ENCODE measurements at regions of chr21 and their contacts with region 1.

Region 1: DNA sequence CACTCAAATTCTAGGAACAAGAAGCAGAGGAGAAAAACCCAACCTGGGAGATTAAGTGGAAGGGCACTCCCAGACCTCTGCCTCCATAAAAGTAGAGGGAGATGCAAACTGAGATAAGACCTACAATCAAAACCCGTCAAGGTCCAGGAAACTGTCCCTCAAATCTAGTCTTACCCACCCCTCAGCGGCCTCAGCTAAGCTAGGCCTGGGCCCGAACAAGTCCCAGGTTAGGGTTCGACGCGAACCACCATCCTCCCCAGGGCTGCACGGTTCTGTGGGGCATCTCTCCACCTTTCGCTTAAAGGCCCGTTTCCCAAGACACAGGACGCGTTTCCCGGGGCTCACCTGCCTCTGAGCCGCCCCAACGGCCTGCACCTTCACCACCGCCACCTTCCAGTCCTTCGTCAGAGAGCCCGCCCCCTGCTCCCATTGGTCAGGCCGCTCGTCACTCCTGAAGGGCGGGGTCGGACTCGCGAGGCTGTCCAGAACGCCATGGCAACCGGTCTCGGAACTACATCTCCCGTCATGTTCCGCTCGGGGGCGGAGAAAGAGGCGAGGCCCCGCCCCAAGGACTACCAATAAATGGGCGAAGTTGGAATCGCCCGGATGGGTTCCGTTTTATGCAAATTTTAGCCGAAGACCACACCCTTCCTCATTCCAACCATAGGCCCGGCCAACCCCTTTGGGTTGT is at the start of gene CRYZL1:
- DNase-seq: peak; percentile 96 to 100 (median 100)
- ATAC-seq: peak; percentile 89
- H3K4me3 ChIP-seq: peak within 1 kb of the TSS; percentile 97
- H3K4me3 Mint-ChIP-seq: peak within 1 kb of the TSS; percentile 83 to 99 (median 93)
- H3K27ac ChIP-seq: peak within 1 kb of the TSS; percentile 75
- H3K27ac Mint-ChIP-seq: peak within 1 kb of the TSS; percentile 85 to 100 (median 94)
- H3K4me1 ChIP-seq: peaks cover 4 to 7% of the 10 kb centered on the region in 2 donors
- H3K4me1 Mint-ChIP-seq: peaks cover 19 to 50% (median 37%) of the 10 kb centered on the region in 7 donors
- H3K27me3 ChIP-seq: no peaks in the 10 kb centered on the region
- H3K27me3 Mint-ChIP-seq: peaks cover 9 to 29% (median 15%) of the 10 kb centered on the region in 5 donors
- total RNA-seq, gene CRYZL1: 34.6 to 75.5 (median 40.4) TPM

Region 2: DNA sequence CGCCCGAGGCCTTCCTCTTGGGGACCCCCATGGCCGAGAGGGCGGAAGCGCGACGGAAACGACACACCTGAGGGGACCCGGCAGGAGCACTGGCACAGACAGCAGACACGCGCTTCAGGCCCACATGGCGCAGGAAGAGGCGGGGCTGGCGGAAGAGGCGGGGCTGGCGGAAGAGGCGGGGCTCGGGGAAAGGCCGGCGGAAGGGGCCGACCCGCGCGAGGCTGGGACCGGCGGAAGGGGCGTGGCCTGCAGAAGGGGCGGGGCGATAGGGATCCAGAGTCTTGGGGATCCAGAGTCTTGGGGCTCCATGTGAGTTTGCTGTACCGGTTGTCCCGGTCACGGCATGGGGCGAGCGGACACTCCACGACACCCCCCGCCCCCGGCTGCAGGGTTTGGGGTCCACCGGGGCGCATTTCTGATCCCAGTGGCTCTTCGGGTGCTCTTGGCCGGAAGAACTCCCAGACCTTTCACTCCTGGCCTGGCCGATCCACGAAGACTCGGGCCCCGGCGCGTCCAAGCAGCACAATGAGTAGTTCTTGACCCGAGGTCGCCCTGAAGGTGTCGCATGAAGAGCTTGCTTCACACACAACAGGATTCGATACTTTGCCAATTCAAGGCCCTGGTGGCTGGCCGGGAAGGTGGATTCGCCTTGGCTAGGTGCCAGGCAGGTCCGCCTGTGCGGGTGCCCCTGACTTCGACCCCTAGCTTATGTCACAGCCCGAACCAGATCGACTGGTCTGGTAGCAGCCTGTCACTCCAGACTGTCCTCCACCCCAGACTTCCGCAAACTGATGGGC is 1248.4 kb before region 1 on chr21 and contains the start of gene URB1:
- CTCF ChIA-PET with region 1: no interaction called
- POLR2A ChIA-PET with region 1: no interaction called
- intact Hi-C with region 1: loop called in 1 of 2 experiments (anchors 1 kb)
- DNase-seq: peak; percentile 88 to 99 (median 94)
- ATAC-seq: peak; percentile 99
- H3K4me3 ChIP-seq: peak within 1 kb of the TSS; percentile 85
- H3K4me3 Mint-ChIP-seq: peak within 1 kb of the TSS; percentile 81 to 92 (median 86)
- H3K27ac ChIP-seq: peak within 1 kb of the TSS; percentile 70
- H3K27ac Mint-ChIP-seq: peak within 1 kb of the TSS; percentile 46 to 90 (median 71)
- H3K4me1 ChIP-seq: peaks cover 8 to 12% of the 10 kb centered on the region in 2 donors
- H3K4me1 Mint-ChIP-seq: peaks cover 34 to 52% (median 43%) of the 10 kb centered on the region in 7 donors
- H3K27me3 ChIP-seq: no peaks in the 10 kb centered on the region
- H3K27me3 Mint-ChIP-seq: peaks cover 2 to 20% (median 3%) of the 10 kb centered on the region in 5 donors
- total RNA-seq, gene URB1: 14.5 to 20.6 (median 17.9) TPM

Region 3: GRCh38 chr21:32727687-32728455 is 913.6 kb before region 1 on chr21 and contains the start of gene SYNJ1:
- CTCF ChIA-PET with region 1: no interaction called
- POLR2A ChIA-PET with region 1: interaction called, 3 read pairs
- intact Hi-C with region 1: loop called (anchors 1 kb)
- DNase-seq: peak; percentile 90 to 97 (median 93)
- ATAC-seq: peak; percentile 95
- H3K4me3 ChIP-seq: peak within 1 kb of the TSS; percentile 78
- H3K4me3 Mint-ChIP-seq: peak within 1 kb of the TSS; percentile 92 to 100 (median 98)
- H3K27ac ChIP-seq: peak within 1 kb of the TSS; percentile 82
- H3K27ac Mint-ChIP-seq: peak within 1 kb of the TSS; percentile 90 to 99 (median 97)
- H3K4me1 ChIP-seq: peaks cover 7 to 42% of the 10 kb centered on the region in 2 donors
- H3K4me1 Mint-ChIP-seq: peaks cover 29 to 78% (median 69%) of the 10 kb centered on the region in 7 donors
- H3K27me3 ChIP-seq: no peaks in the 10 kb centered on the region
- H3K27me3 Mint-ChIP-seq: no peaks in the 10 kb centered on the region
- total RNA-seq, gene SYNJ1: 21.5 to 28.5 (median 22.2) TPM

Region 4: DNA sequence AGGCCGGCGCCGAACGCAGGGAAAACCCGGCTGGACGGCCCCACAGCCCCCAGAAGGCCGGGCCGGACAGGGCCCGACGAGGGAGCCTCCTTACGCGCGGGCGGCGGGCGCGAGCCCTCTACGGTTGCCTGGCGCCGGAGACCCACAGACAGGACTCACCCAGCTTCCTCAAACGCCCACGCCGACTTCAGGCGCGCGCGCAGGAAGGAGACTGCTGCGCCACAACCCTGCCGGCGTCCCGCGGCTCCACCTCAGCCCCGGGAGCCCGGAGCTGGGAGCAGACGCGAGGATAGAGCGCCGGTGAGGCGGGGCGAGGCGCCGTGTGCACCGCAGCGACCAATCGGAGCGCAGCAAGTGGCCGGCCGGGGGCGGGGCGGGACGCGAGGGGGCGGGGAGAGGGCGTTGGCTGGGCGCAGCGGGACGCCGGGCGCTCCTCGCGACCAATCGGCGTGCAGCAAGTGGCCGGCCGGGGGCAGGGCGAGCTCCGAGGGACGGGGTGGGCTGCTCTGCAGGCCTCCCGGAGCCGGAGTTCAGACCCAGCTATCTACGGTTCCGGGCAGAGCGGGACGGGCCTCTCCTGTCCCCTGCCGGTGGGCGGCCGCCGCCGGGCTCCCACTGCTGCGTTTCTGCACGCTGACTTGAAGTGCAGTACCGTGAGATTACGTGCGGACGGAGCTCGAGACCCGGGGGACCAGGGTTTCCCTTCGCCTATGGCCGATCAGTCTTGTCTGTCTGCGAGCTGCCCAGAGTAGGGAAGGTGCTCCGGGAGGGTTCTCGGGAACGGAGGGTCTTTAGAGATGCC is 161.6 kb before region 1 on chr21 and contains the start of gene TMEM50B:
- CTCF ChIA-PET with region 1: no interaction called
- POLR2A ChIA-PET with region 1: interaction called, 3 read pairs
- intact Hi-C with region 1: loop called (anchors 1 kb)
- DNase-seq: peak; percentile 85 to 96 (median 94)
- ATAC-seq: peak; percentile 95
- H3K4me3 ChIP-seq: peak within 1 kb of the TSS; percentile 70
- H3K4me3 Mint-ChIP-seq: peak within 1 kb of the TSS; percentile 87 to 96 (median 96)
- H3K27ac ChIP-seq: peak within 1 kb of the TSS; percentile 89
- H3K27ac Mint-ChIP-seq: peak within 1 kb of the TSS; percentile 90 to 99 (median 95)
- H3K4me1 ChIP-seq: peaks cover 0 to 5% of the 10 kb centered on the region in 2 donors
- H3K4me1 Mint-ChIP-seq: peaks cover 7 to 33% (median 21%) of the 10 kb centered on the region in 7 donors
- H3K27me3 ChIP-seq: no peaks in the 10 kb centered on the region
- H3K27me3 Mint-ChIP-seq: peaks cover 0 to 15% (median 0%) of the 10 kb centered on the region in 5 donors
- total RNA-seq, gene TMEM50B: 38.3 to 108 (median 61.7) TPM

Region 5: GRCh38 chr21:33894736-33895288 is 253.3 kb after region 1 on chr21:
- CTCF ChIA-PET with region 1: no interaction called
- POLR2A ChIA-PET with region 1: no interaction called
- intact Hi-C with region 1: loop called in 1 of 2 experiments (anchors 2 kb)
- DNase-seq: peak; percentile 23 to 74 (median 67)
- ATAC-seq: peak; percentile 97
- H3K4me3 ChIP-seq: peak overlapping the region; percentile 36
- H3K4me3 Mint-ChIP-seq: peak overlapping the region; percentile 64 to 90 (median 78)
- H3K27ac ChIP-seq: peak overlapping the region; percentile 23
- H3K27ac Mint-ChIP-seq: peak overlapping the region in 8 of 9 donors; percentile 33 to 90 (median 74)
- H3K4me1 ChIP-seq: no peaks in the 10 kb centered on the region
- H3K4me1 Mint-ChIP-seq: peaks cover 8 to 16% (median 15%) of the 10 kb centered on the region in 7 donors
- H3K27me3 ChIP-seq: no peaks in the 10 kb centered on the region
- H3K27me3 Mint-ChIP-seq: peaks cover 0 to 26% (median 0%) of the 10 kb centered on the region in 5 donors

Region 6: DNA sequence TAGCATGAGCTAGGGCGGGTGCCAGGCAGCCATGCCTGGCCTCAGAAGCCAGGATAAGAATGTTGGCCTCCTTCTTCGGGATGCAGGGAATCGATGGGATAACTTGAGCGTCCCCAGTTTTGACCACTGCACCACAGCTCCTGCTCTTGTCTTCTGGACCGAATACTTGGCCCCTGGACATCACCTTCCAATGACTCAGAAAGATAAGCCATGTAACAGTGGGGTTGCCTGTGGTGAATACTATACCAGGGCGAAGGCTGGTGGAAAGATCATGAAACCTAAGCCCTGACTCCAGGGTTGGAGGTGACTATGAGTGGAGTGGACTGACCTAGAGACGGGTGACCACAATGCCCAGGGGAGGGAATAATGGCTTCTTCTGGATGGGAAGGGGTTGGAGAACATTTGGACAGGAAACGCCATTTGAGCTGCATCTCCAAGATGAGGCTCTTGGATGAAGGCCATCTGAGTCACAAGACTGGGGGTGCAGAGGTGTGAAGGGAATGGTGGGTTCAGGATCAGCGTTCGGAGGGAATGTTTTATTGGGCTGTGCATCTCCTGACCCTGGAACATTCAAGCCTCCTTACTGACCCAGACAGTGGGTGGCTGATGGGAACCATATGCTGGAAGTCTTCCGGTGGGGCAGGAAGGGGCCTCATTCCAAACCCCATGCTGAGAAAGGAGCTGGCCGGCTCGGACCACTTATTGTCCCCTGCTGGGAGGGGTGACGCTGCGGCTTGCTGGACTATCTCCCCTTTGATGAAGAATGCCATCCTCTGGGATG is 703.8 kb after region 1 on chr21:
- CTCF ChIA-PET with region 1: no interaction called
- POLR2A ChIA-PET with region 1: no interaction called
- intact Hi-C with region 1: loop called in 1 of 2 experiments (anchors 5 kb)
- DNase-seq: no peak
- ATAC-seq: no peak
- H3K4me3 ChIP-seq: no peak overlapping the region
- H3K4me3 Mint-ChIP-seq: no peak overlapping the region
- H3K27ac ChIP-seq: no peak overlapping the region
- H3K27ac Mint-ChIP-seq: peak overlapping the region in 1 of 9 donors; percentile 74
- H3K4me1 ChIP-seq: no peaks in the 10 kb centered on the region
- H3K4me1 Mint-ChIP-seq: peaks cover 0 to 15% (median 5%) of the 10 kb centered on the region in 7 donors
- H3K27me3 ChIP-seq: no peaks in the 10 kb centered on the region
- H3K27me3 Mint-ChIP-seq: peaks cover 0 to 8% (median 0%) of the 10 kb centered on the region in 5 donors

Measured in naive thymus-derived CD4-positive, alpha-beta T cell (primary cell).